CD4-positive, alpha-beta memory T cell (primary cell): ENCODE measurements at regions of chr16 and their contacts with region 1.

Region 1: DNA sequence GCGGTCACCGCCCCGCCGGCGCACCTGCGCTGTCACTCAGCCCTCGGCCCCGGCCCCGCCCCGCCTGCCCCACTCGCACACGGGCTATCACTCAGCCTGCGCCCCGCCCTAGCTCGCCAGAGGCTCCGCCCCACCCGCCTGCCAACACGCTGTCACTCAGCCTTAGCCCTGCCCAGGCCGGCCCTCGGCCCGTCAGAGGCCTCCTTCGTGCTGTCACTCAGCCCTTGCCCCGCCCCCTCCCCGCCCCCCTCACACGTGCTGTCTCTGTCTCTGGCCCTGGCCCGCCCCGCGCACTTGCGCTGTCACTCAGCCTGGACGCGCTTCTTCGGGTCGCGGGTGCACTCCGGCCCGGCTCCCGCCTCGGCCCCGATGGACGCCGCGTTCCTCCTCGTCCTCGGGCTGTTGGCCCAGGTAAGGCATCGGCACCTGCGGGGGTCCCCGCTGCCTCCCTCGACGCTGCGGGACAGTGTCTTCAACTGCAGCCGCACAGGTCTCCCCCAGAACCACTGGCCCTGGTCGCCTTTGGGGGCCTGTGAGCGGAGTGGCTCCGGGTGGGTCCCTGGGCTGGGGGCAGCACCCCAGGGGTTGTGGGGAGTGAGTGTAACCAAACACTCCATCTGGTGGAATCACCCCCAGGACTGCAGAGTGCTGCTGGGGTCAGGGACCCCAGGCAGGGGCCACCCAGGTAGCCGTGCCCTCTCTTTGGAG is at the start of gene CDH15:
- DNase-seq: peak; percentile 88 to 97 (median 93)
- H3K4me3 ChIP-seq: peak within 1 kb of the TSS in 1 of 2 donors; percentile 57
- H3K4me3 Mint-ChIP-seq: peak within 1 kb of the TSS; percentile 59 to 87 (median 74)
- H3K27ac ChIP-seq: no peak within 1 kb of the TSS
- H3K27ac Mint-ChIP-seq: peak within 1 kb of the TSS in 6 of 7 donors; percentile 49 to 89 (median 74)
- H3K4me1 ChIP-seq: peaks cover 25% of the 10 kb centered on the region
- H3K4me1 Mint-ChIP-seq: peaks cover 4 to 8% (median 7%) of the 10 kb centered on the region in 4 donors
- H3K27me3 ChIP-seq: no peaks in the 10 kb centered on the region
- H3K27me3 Mint-ChIP-seq: peaks cover 0 to 1% of the 10 kb centered on the region in 2 donors
- total RNA-seq, gene CDH15: not detected

Region 2: DNA sequence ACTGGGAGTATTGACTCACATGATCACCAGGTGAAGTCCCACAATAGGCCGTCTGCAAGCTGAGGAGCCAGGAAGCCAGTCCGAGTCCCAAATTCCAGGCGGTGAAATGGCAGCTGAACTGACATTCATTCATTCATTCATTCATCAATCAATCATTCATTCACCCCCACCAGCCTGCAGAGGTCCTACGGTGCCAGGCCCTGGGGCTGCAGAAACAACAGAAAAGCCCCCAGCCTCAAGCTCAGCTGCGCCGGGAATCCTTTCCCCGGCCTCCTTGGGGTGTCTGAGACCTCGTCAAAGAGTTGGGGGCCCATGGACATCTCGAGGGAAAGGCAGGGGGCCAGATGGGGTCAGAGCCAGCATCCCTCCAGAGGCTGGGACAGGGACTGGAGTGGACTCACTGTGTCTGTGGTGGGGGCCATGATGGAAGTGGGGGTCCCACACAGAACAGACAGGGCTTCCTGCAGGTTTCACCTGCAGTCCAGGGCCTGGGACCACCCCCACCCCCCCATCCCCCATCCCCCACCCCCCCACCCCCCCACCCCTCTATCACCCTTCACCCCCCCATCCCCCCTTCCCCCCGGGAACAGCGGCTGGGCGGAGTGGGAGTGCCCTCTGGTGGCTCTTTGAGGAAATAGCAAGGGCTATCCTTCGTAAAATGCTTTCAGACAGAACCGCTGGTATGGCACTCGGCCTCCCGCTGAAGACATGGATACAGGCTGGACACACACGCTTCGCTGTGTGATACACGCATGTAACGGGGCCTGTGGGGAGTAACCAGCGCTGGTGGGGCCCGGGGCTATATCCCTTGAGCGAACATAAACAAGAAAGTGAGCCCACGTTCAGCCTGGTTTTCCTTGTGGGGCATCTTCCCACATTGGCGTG is 609.9 kb before region 1 on chr16:
- CTCF ChIA-PET with region 1: no interaction called
- POLR2A ChIA-PET with region 1: no interaction called
- intact Hi-C with region 1: loop called (anchors 5 kb)
- DNase-seq: peak; percentile 40 to 56 (median 50)
- H3K4me3 ChIP-seq: no peak overlapping the region
- H3K4me3 Mint-ChIP-seq: no peak overlapping the region
- H3K27ac ChIP-seq: no peak overlapping the region
- H3K27ac Mint-ChIP-seq: peak overlapping the region in 3 of 7 donors; percentile 44 to 82 (median 57)
- H3K4me1 ChIP-seq: peaks cover 4% of the 10 kb centered on the region
- H3K4me1 Mint-ChIP-seq: peaks cover 2 to 4% (median 3%) of the 10 kb centered on the region in 4 donors
- H3K27me3 ChIP-seq: no peaks in the 10 kb centered on the region
- H3K27me3 Mint-ChIP-seq: peaks cover 0 to 4% of the 10 kb centered on the region in 2 donors

Region 3: GRCh38 chr16:88941913-88942909 is 229.4 kb before region 1 on chr16:
- CTCF ChIA-PET with region 1: interaction called, 8 read pairs
- POLR2A ChIA-PET with region 1: no interaction called
- intact Hi-C with region 1: loop called (anchors 1 kb)
- DNase-seq: peak in 4 of 5 donors; percentile 37 to 48 (median 42)
- H3K4me3 ChIP-seq: no peak overlapping the region
- H3K4me3 Mint-ChIP-seq: peak overlapping the region in 7 of 8 donors; percentile 41 to 70 (median 52)
- H3K27ac ChIP-seq: no peak overlapping the region
- H3K27ac Mint-ChIP-seq: peak overlapping the region in 1 of 7 donors; percentile 37
- H3K4me1 ChIP-seq: peaks cover 13% of the 10 kb centered on the region
- H3K4me1 Mint-ChIP-seq: peaks cover 0 to 14% (median 9%) of the 10 kb centered on the region in 4 donors
- H3K27me3 ChIP-seq: peaks cover 17% of the 10 kb centered on the region
- H3K27me3 Mint-ChIP-seq: peaks cover 20 to 33% of the 10 kb centered on the region in 2 donors

Region 4: DNA sequence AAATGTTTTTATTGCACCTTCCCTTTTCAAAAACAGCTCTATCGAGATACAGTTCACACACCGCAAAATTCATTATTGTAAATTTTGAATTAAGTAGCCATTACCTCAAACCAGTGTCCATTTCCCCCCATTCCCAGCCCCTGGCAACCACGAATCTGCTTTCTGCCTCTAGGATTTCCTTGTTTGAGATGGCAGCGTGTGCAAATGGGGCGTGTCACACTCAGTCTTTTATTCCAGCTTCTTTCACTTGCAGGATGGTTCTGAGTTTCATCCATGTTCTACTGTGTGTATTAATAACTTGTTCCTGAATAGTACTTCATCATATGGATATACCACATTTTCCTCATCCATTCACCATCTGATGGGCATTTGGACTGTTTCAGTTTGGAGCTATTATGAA is 63.2 kb before region 1 on chr16:
- CTCF ChIA-PET with region 1: no interaction called
- POLR2A ChIA-PET with region 1: no interaction called
- intact Hi-C with region 1: no loop called
- DNase-seq: no peak
- H3K4me3 ChIP-seq: no peak overlapping the region
- H3K4me3 Mint-ChIP-seq: no peak overlapping the region
- H3K27ac ChIP-seq: no peak overlapping the region
- H3K27ac Mint-ChIP-seq: peak overlapping the region in 3 of 7 donors; percentile 12 to 80 (median 45)
- H3K4me1 ChIP-seq: peaks cover 10% of the 10 kb centered on the region
- H3K4me1 Mint-ChIP-seq: peaks cover 4 to 8% (median 7%) of the 10 kb centered on the region in 4 donors
- H3K27me3 ChIP-seq: no peaks in the 10 kb centered on the region
- H3K27me3 Mint-ChIP-seq: no peaks in the 10 kb centered on the region

Region 5: GRCh38 chr16:89201439-89202377 is 30.1 kb after region 1 on chr16:
- CTCF ChIA-PET with region 1: no interaction called
- POLR2A ChIA-PET with region 1: no interaction called
- intact Hi-C with region 1: loop called (anchors 1 kb)
- DNase-seq: peak; percentile 60 to 75 (median 71)
- H3K4me3 ChIP-seq: no peak overlapping the region
- H3K4me3 Mint-ChIP-seq: peak overlapping the region in 7 of 8 donors; percentile 20 to 73 (median 64)
- H3K27ac ChIP-seq: no peak overlapping the region
- H3K27ac Mint-ChIP-seq: peak overlapping the region in 1 of 7 donors; percentile 70
- H3K4me1 ChIP-seq: peaks cover 10% of the 10 kb centered on the region
- H3K4me1 Mint-ChIP-seq: peaks cover 0 to 21% (median 12%) of the 10 kb centered on the region in 4 donors
- H3K27me3 ChIP-seq: peaks cover 13% of the 10 kb centered on the region
- H3K27me3 Mint-ChIP-seq: peaks cover 27 to 29% of the 10 kb centered on the region in 2 donors